MCF 10A (cell line): ENCODE measurements at regions of chr1 and their contacts with region 1.

Region 1: GRCh38 chr1:172745014-172745413 is 86.1 kb downstream of the FASLG start:
- DNase-seq: peak; percentile 91
- H3K4me3 Mint-ChIP-seq: peak overlapping the region; percentile 42
- H3K27ac Mint-ChIP-seq: peak overlapping the region; percentile 86
- H3K4me1 Mint-ChIP-seq: peaks cover 42% of the 10 kb centered on the region
- H3K27me3 Mint-ChIP-seq: no peaks in the 10 kb centered on the region
- CTCF ChIP-seq: peak; percentile 85

Region 2: GRCh38 chr1:172622541-172622940 is 122.5 kb before region 1 on chr1:
- CTCF ChIA-PET with region 1: no interaction called
- POLR2A ChIA-PET with region 1: no interaction called
- intact Hi-C with region 1: no loop called
- DNase-seq: no peak
- H3K4me3 Mint-ChIP-seq: no peak overlapping the region
- H3K27ac Mint-ChIP-seq: no peak overlapping the region
- H3K4me1 Mint-ChIP-seq: no peaks in the 10 kb centered on the region
- H3K27me3 Mint-ChIP-seq: no peaks in the 10 kb centered on the region
- CTCF ChIP-seq: no peak

Region 3: DNA sequence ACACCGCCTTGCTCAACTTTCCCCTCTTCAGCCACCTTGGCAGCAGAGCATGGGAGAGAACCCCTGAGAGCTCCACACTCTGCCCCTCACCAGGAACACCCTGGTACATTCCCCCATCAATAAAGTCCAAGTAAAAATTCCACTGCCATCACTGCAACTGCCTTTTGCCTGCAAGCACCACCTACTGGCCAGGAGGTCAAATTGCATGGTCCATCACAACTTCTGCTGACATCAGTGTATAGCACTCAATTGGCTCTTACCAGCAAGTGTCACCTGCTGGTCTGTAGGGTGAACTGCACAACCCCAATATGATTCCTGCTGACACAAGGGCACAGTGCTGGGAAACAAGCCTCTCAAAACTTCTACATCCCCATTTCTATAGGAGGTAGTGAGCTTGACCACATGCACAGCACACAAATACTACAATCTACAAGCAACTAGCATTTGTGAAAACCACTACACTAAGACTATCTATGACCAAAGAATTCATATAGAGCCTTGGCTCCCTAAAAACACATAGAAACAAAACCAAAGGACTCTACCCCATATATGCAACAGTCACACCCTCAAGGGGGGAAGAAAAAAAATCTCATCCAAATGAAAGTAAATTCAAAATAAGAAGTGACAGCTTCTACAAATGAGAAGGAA is 16.9 kb before region 1 on chr1:
- CTCF ChIA-PET with region 1: interaction called, 97 read pairs
- POLR2A ChIA-PET with region 1: interaction called, 4 read pairs
- intact Hi-C with region 1: no loop called
- DNase-seq: peak; percentile 38
- H3K4me3 Mint-ChIP-seq: no peak overlapping the region
- H3K27ac Mint-ChIP-seq: no peak overlapping the region
- H3K4me1 Mint-ChIP-seq: peaks cover 6% of the 10 kb centered on the region
- H3K27me3 Mint-ChIP-seq: no peaks in the 10 kb centered on the region
- CTCF ChIP-seq: peak; percentile 44

Region 4: GRCh38 chr1:172826096-172826743 is 81.2 kb after region 1 on chr1:
- CTCF ChIA-PET with region 1: interaction called, 334 read pairs
- POLR2A ChIA-PET with region 1: interaction called, 17 read pairs
- intact Hi-C with region 1: loop called (anchors 1 kb)
- DNase-seq: peak; percentile 87
- H3K4me3 Mint-ChIP-seq: no peak overlapping the region
- H3K27ac Mint-ChIP-seq: no peak overlapping the region
- H3K4me1 Mint-ChIP-seq: peaks cover 7% of the 10 kb centered on the region
- H3K27me3 Mint-ChIP-seq: no peaks in the 10 kb centered on the region
- CTCF ChIP-seq: peak; percentile 86

Region 5: DNA sequence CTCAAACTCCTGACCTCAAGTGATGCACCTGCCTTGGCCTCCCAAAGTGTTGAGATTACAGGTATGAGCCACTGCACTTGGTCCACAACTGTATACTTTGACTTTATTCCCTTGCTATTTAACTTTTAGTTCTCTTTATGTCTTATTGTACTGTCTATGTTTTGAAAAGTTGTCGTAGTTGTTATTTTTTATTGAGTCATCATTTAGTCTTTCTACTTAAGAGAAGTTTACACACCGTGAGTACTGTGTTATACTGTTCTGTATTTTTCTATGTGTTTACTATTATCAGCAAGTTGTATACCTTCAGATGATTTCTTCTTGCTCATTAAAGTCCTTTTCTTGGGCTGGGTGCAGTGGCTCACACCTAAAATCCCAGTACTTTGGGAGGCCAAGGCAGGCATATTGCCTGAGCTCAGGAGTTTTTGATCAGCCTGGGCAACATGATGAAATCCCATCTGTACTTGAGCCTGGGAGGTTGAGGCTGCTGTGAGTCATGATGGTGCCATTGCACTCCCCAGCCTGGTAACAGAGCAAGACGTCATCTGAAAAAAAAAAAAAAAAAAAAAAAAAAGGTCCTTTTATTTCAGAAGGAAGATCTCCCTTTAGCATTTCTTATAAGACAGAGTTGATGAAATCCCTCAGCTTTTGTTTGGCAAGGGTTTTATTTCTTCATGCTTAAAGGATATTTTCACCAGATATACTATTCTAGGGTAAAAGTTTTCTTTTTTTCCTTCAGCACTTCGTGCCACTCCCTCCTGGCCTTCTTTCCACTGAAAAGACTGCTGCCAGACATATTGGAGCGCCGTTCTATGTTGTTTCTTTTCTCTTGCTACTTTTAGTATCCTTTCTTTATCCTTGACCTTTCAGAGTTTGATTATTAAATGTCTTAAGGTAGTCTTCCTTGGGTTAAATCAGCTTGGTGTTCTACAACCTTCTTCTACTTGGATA is 258.2 kb after region 1 on chr1:
- CTCF ChIA-PET with region 1: interaction called, 10 read pairs
- POLR2A ChIA-PET with region 1: no interaction called
- intact Hi-C with region 1: no loop called
- DNase-seq: peak; percentile 95
- H3K4me3 Mint-ChIP-seq: no peak overlapping the region
- H3K27ac Mint-ChIP-seq: peak overlapping the region; percentile 36
- H3K4me1 Mint-ChIP-seq: peaks cover 16% of the 10 kb centered on the region
- H3K27me3 Mint-ChIP-seq: no peaks in the 10 kb centered on the region
- CTCF ChIP-seq: no peak

Region 6: DNA sequence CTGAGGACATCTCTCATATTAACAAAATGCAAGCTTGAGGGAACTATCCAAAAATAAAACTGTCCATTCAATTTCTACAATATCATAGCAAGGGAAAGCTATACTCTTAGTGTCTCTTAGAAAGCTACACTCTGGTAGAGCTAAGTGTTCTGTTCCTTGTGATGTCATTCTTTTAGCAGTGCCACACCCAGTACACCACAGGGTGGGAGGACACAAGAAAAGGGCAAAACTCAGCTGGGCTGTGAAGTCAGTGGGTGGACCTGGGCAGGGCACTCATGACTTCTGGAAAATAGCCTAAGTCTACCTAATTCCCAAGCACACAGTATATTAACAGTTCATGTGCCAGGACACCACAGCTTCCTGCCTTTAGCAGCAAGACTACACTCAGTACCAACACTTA is 504.3 kb after region 1 on chr1:
- CTCF ChIA-PET with region 1: interaction called, 7 read pairs
- POLR2A ChIA-PET with region 1: interaction called, 3 read pairs
- intact Hi-C with region 1: loop called (anchors 2 kb)
- DNase-seq: peak; percentile 60
- H3K4me3 Mint-ChIP-seq: peak overlapping the region; percentile 2
- H3K27ac Mint-ChIP-seq: peak overlapping the region; percentile 93
- H3K4me1 Mint-ChIP-seq: peaks cover 20% of the 10 kb centered on the region
- H3K27me3 Mint-ChIP-seq: no peaks in the 10 kb centered on the region
- CTCF ChIP-seq: no peak

Region 7: DNA sequence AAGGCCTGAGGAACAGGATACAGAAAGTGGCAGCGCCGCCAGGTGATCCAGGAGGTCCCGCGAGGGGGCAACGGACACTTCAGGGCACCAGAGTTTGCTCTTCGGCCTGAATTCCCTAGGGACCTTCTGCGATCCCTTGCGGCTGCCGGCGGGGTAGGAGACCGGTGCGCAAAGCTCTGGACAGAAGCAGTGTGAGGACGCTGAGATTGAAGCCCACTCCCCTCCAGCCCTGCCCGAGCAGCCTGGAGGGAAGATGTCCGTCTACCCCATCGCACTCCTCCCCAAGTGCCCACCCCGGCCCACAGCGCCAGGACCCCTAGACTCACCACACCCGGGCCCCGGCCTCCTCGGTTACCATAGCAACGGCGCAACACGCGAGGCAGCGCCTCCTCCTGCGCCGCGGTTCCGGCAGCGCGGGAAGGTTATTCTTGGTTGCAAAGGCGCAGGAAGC is 924.5 kb after region 1 on chr1 and contains the start of gene ANKRD45:
- CTCF ChIA-PET with region 1: no interaction called
- POLR2A ChIA-PET with region 1: no interaction called
- intact Hi-C with region 1: no loop called
- DNase-seq: no peak
- H3K4me3 Mint-ChIP-seq: no peak within 1 kb of the TSS
- H3K27ac Mint-ChIP-seq: no peak within 1 kb of the TSS
- H3K4me1 Mint-ChIP-seq: no peaks in the 10 kb centered on the region
- H3K27me3 Mint-ChIP-seq: no peaks in the 10 kb centered on the region
- CTCF ChIP-seq: no peak
- total RNA-seq, gene ANKRD45: 0.42 TPM in 1 of 2 replicates, not detected in the other

Region 8: DNA sequence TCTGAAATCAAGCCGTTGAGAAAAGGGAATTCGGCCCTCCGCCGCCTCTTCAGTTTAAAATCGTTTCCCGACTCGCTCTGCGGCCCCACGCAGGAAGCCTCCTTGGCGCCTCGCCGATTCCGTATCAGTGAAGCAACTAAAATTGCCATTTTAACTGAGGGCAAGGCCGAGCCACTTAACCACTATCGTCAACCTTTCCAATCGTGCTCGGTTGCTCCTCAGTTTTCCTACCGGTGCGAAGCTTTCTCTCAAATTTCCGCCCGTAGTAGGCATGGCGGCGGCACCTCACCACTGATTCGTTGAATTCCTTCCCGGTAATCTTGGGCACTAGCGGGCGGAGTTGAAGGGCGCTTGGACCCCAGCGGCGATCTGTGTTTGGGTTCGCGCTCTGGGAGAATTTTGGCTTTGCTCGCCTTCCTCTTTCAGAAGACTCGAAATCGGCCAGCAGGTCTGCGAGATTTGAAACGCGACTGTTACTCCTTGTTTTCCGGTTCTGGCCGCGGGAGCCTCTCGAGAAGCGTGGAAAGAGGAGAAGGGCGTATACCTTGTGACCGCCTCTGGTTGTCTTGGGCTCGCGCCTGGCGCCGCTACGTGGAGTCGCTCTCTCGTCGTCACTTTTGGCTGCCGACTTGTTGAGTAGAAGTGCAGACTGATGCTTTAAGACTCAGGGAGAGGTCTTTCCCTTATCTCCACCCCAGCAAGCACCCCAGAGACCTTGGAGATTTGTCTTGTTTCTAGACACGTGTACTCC is 1079.5 kb after region 1 on chr1 and contains the starts of genes CENPL and DARS2:
- CTCF ChIA-PET with region 1: interaction called, 9 read pairs
- POLR2A ChIA-PET with region 1: interaction called, 3 read pairs
- intact Hi-C with region 1: loop called (anchors 1 kb)
- DNase-seq: peak; percentile 100
- H3K4me3 Mint-ChIP-seq: peak within 1 kb of the TSS; percentile 97
- H3K27ac Mint-ChIP-seq: peak within 1 kb of the TSS; percentile 98
- H3K4me1 Mint-ChIP-seq: peaks cover 39% of the 10 kb centered on the region
- H3K27me3 Mint-ChIP-seq: no peaks in the 10 kb centered on the region
- CTCF ChIP-seq: no peak
- total RNA-seq, gene CENPL: 14.1 and 24.5 TPM in 2 replicates
- total RNA-seq, gene DARS2: 34.6 and 40.4 TPM in 2 replicates

Region 9: DNA sequence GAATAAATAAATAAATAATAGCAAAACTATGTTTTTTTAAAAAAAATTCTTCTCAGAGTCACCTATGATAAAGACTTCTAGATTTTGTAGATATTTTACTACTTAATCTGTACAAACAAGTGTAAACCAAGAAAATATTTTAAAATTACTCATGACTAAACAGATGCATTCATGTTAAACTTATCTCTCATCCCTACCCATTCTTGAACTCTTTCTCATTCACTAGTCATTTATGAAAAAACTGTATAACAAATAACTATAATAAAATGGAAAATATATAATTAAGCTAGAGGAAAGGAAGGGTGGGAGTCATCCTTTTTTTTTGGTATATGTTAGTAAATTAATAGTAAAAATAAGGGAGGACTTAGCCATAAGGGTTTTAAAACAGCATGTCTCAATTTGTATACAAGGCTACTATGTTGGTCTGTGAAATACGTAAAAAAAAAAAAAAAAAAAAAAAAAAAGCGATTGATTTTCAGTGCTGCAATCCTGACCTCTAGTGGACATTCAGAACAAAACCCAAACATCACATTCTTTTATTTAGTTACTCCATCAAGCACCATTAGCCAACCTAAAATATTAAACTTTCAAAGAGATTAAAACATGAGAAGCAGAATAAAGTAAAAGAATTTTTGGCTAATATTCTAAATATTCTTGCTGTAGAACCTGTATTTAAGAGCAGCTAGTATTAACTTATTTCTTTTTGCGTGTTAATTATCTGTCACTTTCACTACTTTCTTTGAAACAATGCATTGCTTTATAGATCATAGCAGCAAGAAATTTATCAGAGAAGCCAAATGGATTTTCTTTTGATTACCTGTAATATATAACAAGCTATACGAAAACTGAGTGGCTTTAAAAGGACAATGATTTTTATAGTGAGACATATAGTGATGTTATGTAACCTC is 1998.9 kb after region 1 on chr1:
- CTCF ChIA-PET with region 1: no interaction called
- POLR2A ChIA-PET with region 1: no interaction called
- intact Hi-C with region 1: loop called (anchors 2 kb)
- DNase-seq: peak; percentile 65
- H3K4me3 Mint-ChIP-seq: no peak overlapping the region
- H3K27ac Mint-ChIP-seq: no peak overlapping the region
- H3K4me1 Mint-ChIP-seq: no peaks in the 10 kb centered on the region
- H3K27me3 Mint-ChIP-seq: no peaks in the 10 kb centered on the region
- CTCF ChIP-seq: peak; percentile 76